ENCODE measurements at regions of chr4 and their contacts with region 1.

Region 1: GRCh38 chr4:122178961-122179360 is 26.8 kb downstream of the BLTP1 start:
- DNase-seq: no peak
- H3K4me3 ChIP-seq: no peak overlapping the region
- H3K27ac ChIP-seq: no peak overlapping the region
- H3K4me1 ChIP-seq: no peaks in the 10 kb centered on the region
- H3K27me3 ChIP-seq: no peaks in the 10 kb centered on the region
- CTCF ChIP-seq: no peak

Region 2: GRCh38 chr4:122276359-122276758 is 97.4 kb after region 1 on chr4:
- intact Hi-C with region 1: loop called (anchors 10 kb)
- DNase-seq: no peak
- H3K4me3 ChIP-seq: no peak overlapping the region
- H3K27ac ChIP-seq: no peak overlapping the region
- H3K4me1 ChIP-seq: no peaks in the 10 kb centered on the region
- H3K27me3 ChIP-seq: no peaks in the 10 kb centered on the region
- CTCF ChIP-seq: no peak